ENCODE measurements at regions of chr4 and their contacts with region 1.

Region 1: GRCh38 chr4:122758033-122758432 is 25.5 kb downstream of the BBS12 start:
- DNase-seq: no peak
- ATAC-seq: peak; percentile 51

Region 2: GRCh38 chr4:122922877-122923511 is 165.0 kb after region 1 on chr4:
- intact Hi-C with region 1: loop called (anchors 10 kb)
- DNase-seq: peak; percentile 89
- ATAC-seq: peak; percentile 98

Measured in sciatic nerve (tissue), 2 donors.